T-cell (primary cell): ENCODE measurements at regions of chr3 and their contacts with region 1.

Region 1: GRCh38 chr3:86648087-86648486 is 342.9 kb downstream of the VGLL3 start:
- DNase-seq: no peak
- ATAC-seq: no peak
- H3K4me3 ChIP-seq: no peak overlapping the region
- H3K4me3 Mint-ChIP-seq: no peak overlapping the region
- H3K27ac ChIP-seq: no peak overlapping the region
- H3K27ac Mint-ChIP-seq: no peak overlapping the region
- H3K4me1 ChIP-seq: no peaks in the 10 kb centered on the region
- H3K4me1 Mint-ChIP-seq: no peaks in the 10 kb centered on the region
- H3K27me3 ChIP-seq: no peaks in the 10 kb centered on the region
- H3K27me3 Mint-ChIP-seq: no peaks in the 10 kb centered on the region

Region 2: DNA sequence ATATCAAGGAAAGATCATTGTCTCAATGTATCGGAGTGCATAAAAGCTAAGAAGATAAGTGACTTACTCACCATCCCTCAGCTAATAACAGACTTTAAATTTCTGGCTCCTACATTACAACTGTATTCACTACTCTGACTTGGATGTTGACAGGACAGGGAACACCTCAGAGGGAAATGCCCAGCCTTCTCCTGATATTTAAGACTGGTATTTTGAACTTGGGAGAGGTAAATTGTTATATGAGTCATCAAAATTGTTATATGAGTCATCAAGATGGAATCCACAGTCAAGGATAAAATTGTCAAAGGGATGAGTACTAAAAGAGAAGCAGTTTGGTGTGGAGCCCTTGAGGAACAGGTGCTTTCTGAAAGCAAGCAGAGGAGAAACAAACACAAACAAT is 618.5 kb before region 1 on chr3:
- CTCF ChIA-PET with region 1: no interaction called
- POLR2A ChIA-PET with region 1: no interaction called
- DNase-seq: no peak
- ATAC-seq: no peak
- H3K4me3 ChIP-seq: no peak overlapping the region
- H3K4me3 Mint-ChIP-seq: no peak overlapping the region
- H3K27ac ChIP-seq: no peak overlapping the region
- H3K27ac Mint-ChIP-seq: no peak overlapping the region
- H3K4me1 ChIP-seq: no peaks in the 10 kb centered on the region
- H3K4me1 Mint-ChIP-seq: no peaks in the 10 kb centered on the region
- H3K27me3 ChIP-seq: no peaks in the 10 kb centered on the region
- H3K27me3 Mint-ChIP-seq: no peaks in the 10 kb centered on the region

Region 3: GRCh38 chr3:86563400-86563970 is 84.6 kb before region 1 on chr3:
- CTCF ChIA-PET with region 1: no interaction called
- POLR2A ChIA-PET with region 1: interaction called in 1 of 2 experiments, 10 read pairs
- DNase-seq: peak in 1 of 35 experiments; percentile 1
- ATAC-seq: no peak
- H3K4me3 ChIP-seq: no peak overlapping the region
- H3K4me3 Mint-ChIP-seq: no peak overlapping the region
- H3K27ac ChIP-seq: no peak overlapping the region
- H3K27ac Mint-ChIP-seq: no peak overlapping the region
- H3K4me1 ChIP-seq: no peaks in the 10 kb centered on the region
- H3K4me1 Mint-ChIP-seq: no peaks in the 10 kb centered on the region
- H3K27me3 ChIP-seq: no peaks in the 10 kb centered on the region
- H3K27me3 Mint-ChIP-seq: no peaks in the 10 kb centered on the region

Region 4: DNA sequence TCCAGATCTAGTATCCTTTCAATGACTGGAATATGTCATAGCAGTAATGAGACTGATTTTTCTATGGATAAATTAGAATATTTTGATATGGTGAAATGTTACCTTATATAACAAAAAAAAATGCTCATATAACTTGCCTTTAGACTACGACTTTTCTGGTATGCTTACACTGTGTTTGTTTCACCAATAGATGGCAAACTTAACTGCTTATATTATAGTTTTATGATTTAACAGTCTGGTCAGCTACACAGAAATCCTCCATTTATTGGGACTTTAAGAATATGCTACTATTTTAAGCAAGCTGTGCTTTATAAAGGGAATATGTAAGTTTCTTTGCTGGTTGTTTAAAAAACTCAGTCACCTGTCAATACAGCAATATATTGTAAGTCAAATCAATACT is 137.3 kb after region 1 on chr3:
- CTCF ChIA-PET with region 1: no interaction called
- POLR2A ChIA-PET with region 1: no interaction called
- DNase-seq: no peak
- ATAC-seq: no peak
- H3K4me3 ChIP-seq: no peak overlapping the region
- H3K4me3 Mint-ChIP-seq: no peak overlapping the region
- H3K27ac ChIP-seq: no peak overlapping the region
- H3K27ac Mint-ChIP-seq: no peak overlapping the region
- H3K4me1 ChIP-seq: no peaks in the 10 kb centered on the region
- H3K4me1 Mint-ChIP-seq: no peaks in the 10 kb centered on the region
- H3K27me3 ChIP-seq: no peaks in the 10 kb centered on the region
- H3K27me3 Mint-ChIP-seq: no peaks in the 10 kb centered on the region

Region 5: GRCh38 chr3:87742741-87743140 is 1094.7 kb after region 1 on chr3:
- CTCF ChIA-PET with region 1: no interaction called
- POLR2A ChIA-PET with region 1: no interaction called
- DNase-seq: no peak
- ATAC-seq: no peak
- H3K4me3 ChIP-seq: no peak overlapping the region
- H3K4me3 Mint-ChIP-seq: no peak overlapping the region
- H3K27ac ChIP-seq: no peak overlapping the region
- H3K27ac Mint-ChIP-seq: no peak overlapping the region
- H3K4me1 ChIP-seq: no peaks in the 10 kb centered on the region
- H3K4me1 Mint-ChIP-seq: no peaks in the 10 kb centered on the region
- H3K27me3 ChIP-seq: peaks cover 0 to 3% of the 10 kb centered on the region in 2 experiments
- H3K27me3 Mint-ChIP-seq: peaks cover 0 to 5% of the 10 kb centered on the region in 2 donors